ENCODE measurements at regions of chr2 and their contacts with region 1.

Region 1: GRCh38 chr2:54716375-54716774 is 7.1 kb upstream of the EML6 start:
- DNase-seq: no peak
- ATAC-seq: no peak
- H3K4me3 ChIP-seq: no peak overlapping the region
- H3K4me3 Mint-ChIP-seq: no peak overlapping the region
- H3K27ac ChIP-seq: no peak overlapping the region
- H3K27ac Mint-ChIP-seq: no peak overlapping the region
- H3K4me1 ChIP-seq: no peaks in the 10 kb centered on the region
- H3K4me1 Mint-ChIP-seq: no peaks in the 10 kb centered on the region
- H3K27me3 ChIP-seq: peaks cover 0 to 14% of the 10 kb centered on the region in 2 experiments
- H3K27me3 Mint-ChIP-seq: peaks cover 56% of the 10 kb centered on the region
- CTCF ChIP-seq: no peak

Region 2: DNA sequence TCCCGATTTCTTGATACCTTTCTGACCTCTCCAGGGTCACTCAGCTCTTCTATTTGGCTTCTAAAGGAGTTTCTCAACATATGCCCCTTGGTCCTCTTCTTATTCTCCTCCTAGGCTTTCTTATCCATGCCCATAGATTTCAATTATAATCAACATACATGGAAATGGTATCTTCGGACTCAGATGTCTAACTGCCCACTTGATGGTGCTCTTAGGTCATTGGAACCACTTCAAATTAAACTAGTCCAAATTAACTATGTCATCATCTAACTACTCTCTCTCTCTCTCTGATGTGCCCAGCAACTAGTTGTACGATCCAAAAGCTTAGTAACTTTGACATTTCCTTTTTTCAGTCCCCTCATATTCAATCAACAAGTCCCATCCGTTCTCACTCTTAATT is 813.4 kb before region 1 on chr2:
- CTCF ChIA-PET with region 1: no interaction called
- POLR2A ChIA-PET with region 1: no interaction called
- intact Hi-C with region 1: loop called in 1 of 2 experiments (anchors 10 kb)
- DNase-seq: no peak
- ATAC-seq: no peak
- H3K4me3 ChIP-seq: no peak overlapping the region
- H3K4me3 Mint-ChIP-seq: no peak overlapping the region
- H3K27ac ChIP-seq: no peak overlapping the region
- H3K27ac Mint-ChIP-seq: no peak overlapping the region
- H3K4me1 ChIP-seq: no peaks in the 10 kb centered on the region
- H3K4me1 Mint-ChIP-seq: no peaks in the 10 kb centered on the region
- H3K27me3 ChIP-seq: no peaks in the 10 kb centered on the region
- H3K27me3 Mint-ChIP-seq: no peaks in the 10 kb centered on the region
- CTCF ChIP-seq: no peak